WTC11 (cell line): ENCODE measurements at regions of chr5 and their contacts with region 1.

Region 1: DNA sequence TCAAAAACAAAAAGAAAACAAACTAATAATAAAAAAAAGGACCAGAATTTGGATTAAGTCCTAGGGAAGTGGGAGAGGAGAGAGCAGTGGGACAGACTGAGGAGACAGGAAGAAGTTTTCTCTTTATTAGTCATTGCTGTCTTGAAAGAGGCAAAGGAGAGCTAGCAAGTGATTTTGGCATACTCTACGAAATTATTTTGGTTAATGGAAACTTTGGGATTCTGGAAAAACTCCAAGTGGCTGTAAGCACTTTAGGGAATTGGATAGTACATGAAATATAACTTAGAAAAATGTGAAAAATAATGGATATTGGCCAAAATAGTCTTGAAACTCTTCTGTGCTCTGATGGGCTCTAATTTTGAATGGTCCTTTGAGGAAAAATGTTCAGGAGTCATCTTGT is 1641.8 kb upstream of the WWC1 start:
- DNase-seq: no peak
- ATAC-seq: no peak
- H3K4me3 Mint-ChIP-seq: no peak overlapping the region
- H3K27ac Mint-ChIP-seq: no peak overlapping the region
- H3K4me1 Mint-ChIP-seq: peaks cover 3% of the 10 kb centered on the region
- H3K27me3 Mint-ChIP-seq: no peaks in the 10 kb centered on the region
- CTCF ChIP-seq: no peak

Region 2: GRCh38 chr5:166768536-166768935 is 118.9 kb after region 1 on chr5:
- CTCF ChIA-PET with region 1: no interaction called
- POLR2A ChIA-PET with region 1: no interaction called
- DNase-seq: no peak
- ATAC-seq: no peak
- H3K4me3 Mint-ChIP-seq: no peak overlapping the region
- H3K27ac Mint-ChIP-seq: no peak overlapping the region
- H3K4me1 Mint-ChIP-seq: peaks cover 28% of the 10 kb centered on the region
- H3K27me3 Mint-ChIP-seq: no peaks in the 10 kb centered on the region
- CTCF ChIP-seq: no peak

Region 3: DNA sequence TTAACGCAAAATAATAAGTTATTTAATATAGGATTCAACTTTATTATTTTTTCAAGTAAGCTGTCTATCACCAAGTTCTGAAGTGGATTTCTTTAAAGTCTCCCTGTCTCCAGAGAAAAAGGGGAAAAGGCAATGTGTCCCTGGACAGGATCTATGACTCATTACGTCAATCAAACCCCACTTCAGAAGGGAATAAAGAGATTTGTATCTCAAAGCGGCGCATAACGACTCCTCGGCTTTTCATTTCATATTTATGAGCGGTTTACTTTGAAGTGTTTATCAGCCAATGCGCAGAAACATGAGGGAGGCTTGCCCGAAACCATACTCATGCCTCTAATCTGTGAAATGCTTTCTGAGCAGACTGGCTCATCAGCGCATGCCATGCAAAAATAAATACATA is 703.1 kb after region 1 on chr5:
- CTCF ChIA-PET with region 1: no interaction called
- POLR2A ChIA-PET with region 1: interaction called, 14 read pairs
- DNase-seq: no peak
- ATAC-seq: no peak
- H3K4me3 Mint-ChIP-seq: no peak overlapping the region
- H3K27ac Mint-ChIP-seq: no peak overlapping the region
- H3K4me1 Mint-ChIP-seq: peaks cover 26% of the 10 kb centered on the region
- H3K27me3 Mint-ChIP-seq: no peaks in the 10 kb centered on the region
- CTCF ChIP-seq: no peak